Calu3 (cell line): ENCODE measurements at regions of chr5 and their contacts with region 1.

Region 1: DNA sequence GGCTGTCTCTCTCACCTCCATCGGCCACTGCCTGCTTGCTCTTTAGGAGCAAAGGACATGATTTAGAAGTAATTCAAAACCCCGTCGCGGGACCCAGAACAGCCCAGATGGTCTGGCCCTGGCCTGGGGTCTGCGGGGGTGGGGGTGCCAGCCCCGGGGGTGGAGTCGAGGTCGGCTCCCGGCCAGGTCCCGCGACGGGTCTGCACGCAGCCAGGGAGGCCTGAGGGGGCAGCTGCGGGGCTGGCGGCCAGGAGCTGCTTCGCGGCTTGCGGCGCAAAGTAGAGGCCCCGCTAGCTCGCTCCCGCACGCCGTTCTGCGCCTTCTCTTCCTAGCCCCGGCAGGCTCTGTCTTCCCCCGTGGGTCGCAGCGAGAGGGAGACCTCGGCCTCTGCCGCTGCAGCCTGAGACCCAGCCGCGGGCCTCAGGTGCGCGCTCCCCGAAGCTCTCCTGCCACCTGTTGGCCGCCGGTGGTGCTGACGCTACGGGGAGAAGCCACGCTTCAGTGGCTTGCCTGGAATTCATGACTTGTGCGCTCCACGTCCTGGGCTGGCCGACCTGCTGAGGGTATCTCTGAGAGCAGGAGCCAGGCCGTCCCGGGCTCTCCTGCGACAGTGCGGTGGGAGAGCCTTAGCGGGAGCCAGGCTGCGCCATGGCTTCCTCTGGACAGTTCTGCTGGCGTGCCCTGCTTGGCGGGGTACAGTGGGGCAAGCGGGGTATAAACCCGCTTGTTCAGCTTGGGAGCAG is 157.2 kb upstream of the PITX1 start:
- DNase-seq: peak; percentile 93
- H3K4me3 Mint-ChIP-seq: peak overlapping the region; percentile 74
- H3K27ac Mint-ChIP-seq: no peak overlapping the region
- H3K4me1 Mint-ChIP-seq: peaks cover 21% of the 10 kb centered on the region
- H3K27me3 Mint-ChIP-seq: peaks cover 41% of the 10 kb centered on the region
- CTCF ChIP-seq: peak; percentile 96

Region 2: DNA sequence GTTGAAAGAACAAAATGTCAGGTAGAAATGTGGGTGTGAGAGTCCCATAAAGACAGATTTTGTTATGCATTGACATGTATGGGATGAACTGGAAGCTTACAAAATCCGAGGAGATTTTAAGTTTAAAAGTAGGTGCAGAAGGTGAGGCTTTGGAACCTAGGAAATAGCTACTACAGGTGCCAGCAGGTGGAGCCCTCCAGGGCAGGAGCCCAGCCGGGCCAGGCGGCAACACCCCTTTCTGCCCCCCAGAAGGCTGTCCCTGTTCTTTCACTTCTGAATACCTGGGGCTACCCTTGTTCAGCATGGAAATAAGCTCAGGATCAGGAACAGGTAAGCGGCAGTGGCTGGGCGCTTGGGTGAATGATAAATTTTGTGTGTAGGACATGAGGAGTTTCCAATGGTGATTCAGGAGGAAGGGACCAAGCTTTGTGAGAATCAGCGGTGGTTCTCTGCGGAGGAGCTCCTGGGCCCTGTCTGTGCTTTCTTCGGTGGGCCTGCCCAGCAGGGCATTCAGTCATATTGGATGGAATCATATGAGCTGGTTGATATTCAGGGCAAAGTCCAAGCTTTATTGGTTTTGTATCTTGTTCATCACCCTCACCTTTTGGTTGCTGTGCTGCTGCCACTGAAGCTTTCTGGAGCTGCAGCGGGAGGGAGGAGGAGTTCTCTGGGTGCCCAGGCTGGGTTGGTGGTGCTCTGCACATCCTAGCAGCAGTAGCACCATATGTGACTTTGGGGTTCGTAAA is 274.0 kb before region 1 on chr5:
- CTCF ChIA-PET with region 1: interaction called, 15 read pairs
- intact Hi-C with region 1: loop called (anchors 1 kb)
- DNase-seq: peak; percentile 59
- H3K4me3 Mint-ChIP-seq: no peak overlapping the region
- H3K27ac Mint-ChIP-seq: no peak overlapping the region
- H3K4me1 Mint-ChIP-seq: peaks cover 14% of the 10 kb centered on the region
- H3K27me3 Mint-ChIP-seq: no peaks in the 10 kb centered on the region
- CTCF ChIP-seq: peak; percentile 70

Region 3: GRCh38 chr5:135010502-135011354 is 180.5 kb before region 1 on chr5:
- CTCF ChIA-PET with region 1: interaction called, 5 read pairs
- intact Hi-C with region 1: loop called (anchors 1 kb)
- DNase-seq: peak; percentile 30
- H3K4me3 Mint-ChIP-seq: no peak overlapping the region
- H3K27ac Mint-ChIP-seq: no peak overlapping the region
- H3K4me1 Mint-ChIP-seq: peaks cover 6% of the 10 kb centered on the region
- H3K27me3 Mint-ChIP-seq: no peaks in the 10 kb centered on the region
- CTCF ChIP-seq: peak; percentile 50

Region 4: GRCh38 chr5:135034236-135034962 is 156.9 kb before region 1 on chr5:
- CTCF ChIA-PET with region 1: no interaction called
- intact Hi-C with region 1: loop called (anchors 5 kb)
- DNase-seq: peak; percentile 72
- H3K4me3 Mint-ChIP-seq: peak overlapping the region; percentile 65
- H3K27ac Mint-ChIP-seq: peak overlapping the region; percentile 14
- H3K4me1 Mint-ChIP-seq: peaks cover 16% of the 10 kb centered on the region
- H3K27me3 Mint-ChIP-seq: peaks cover 81% of the 10 kb centered on the region
- CTCF ChIP-seq: no peak